ENCODE measurements at regions of chrX and their contacts with region 1.

Region 1: DNA sequence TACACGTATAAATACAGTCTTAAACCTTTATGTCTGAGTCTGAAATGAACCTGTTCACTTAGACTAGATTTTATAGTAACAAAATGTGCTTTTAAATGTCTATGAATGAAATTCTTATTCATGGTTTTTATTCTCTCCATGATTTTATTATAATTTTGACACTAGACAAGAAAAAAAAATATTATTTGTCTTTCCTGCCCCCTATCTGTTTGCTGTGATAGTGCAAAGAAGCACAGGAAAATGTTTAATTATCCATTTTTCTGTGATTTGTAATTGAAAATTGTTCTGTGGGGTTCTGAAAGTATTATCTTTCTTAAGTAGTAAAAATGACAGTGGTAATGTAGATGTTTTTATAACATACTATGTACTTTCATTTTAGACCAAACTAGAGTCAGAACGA is 52.0 kb downstream of the INTS6L start:
- DNase-seq: no peak
- ATAC-seq: no peak

Region 2: GRCh38 chrX:135484641-135485289 is 87.7 kb before region 1 on chrX:
- intact Hi-C with region 1: loop called (anchors 10 kb)
- DNase-seq: no peak
- ATAC-seq: no peak

Region 3: GRCh38 chrX:135893294-135893817 is 320.9 kb after region 1 on chrX and contains the starts of genes CT45A10 and SAGE1:
- intact Hi-C with region 1: no loop called
- DNase-seq: no peak
- ATAC-seq: no peak
- total RNA-seq, gene CT45A10: not detected
- total RNA-seq, gene SAGE1: not detected

Measured in Right ventricle myocardium superior (tissue), 1 donor.